ENCODE measurements at regions of chr12 and their contacts with region 1.

Region 1: DNA sequence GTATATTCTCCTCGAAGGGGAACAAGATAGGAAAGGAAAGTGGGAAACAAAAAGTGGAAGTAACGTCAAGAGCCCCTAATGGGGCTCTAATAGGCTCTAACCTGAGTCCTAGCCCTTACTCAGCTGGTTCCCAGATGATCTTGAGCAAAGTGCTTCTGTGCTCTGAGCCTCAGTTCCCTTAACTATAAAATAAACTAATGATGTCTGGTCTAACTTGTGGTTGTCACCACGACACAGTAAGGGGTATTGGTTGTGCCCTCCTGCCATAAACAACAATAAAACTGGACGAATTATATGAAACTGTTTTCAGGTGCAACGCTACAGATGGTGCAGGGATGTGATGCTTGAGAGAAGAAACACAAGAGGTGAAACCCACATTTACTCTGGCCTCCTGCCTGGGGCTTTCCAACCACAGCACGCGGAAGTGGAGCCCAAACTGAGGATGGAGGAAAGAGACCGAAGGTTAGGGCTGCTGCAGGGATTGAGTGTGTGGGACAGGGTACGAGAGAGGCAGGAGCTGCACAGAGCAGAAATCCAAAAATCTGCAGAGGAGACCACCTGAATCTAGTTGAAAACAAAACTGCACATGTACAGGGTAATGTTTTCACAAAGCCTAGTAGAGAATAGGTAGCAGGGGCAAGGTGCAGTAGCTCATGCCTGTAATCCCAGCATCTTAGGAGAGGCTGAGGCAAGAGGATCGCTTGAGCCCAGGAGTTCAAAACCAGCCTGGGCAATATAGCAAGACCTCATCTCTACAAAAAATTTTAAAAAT is 45.6 kb upstream of the BCL2L14 start:
- DNase-seq: peak; percentile 91
- H3K4me3 ChIP-seq: peak overlapping the region; percentile 58
- H3K27ac ChIP-seq: peak overlapping the region; percentile 94
- H3K4me1 ChIP-seq: peaks cover 80% of the 10 kb centered on the region
- CTCF ChIP-seq: no peak

Region 2: GRCh38 chr12:10212201-10213131 is 1812.6 kb before region 1 on chr12 and contains the start of gene GABARAPL1:
- CTCF ChIA-PET with region 1: no interaction called
- POLR2A ChIA-PET with region 1: no interaction called
- intact Hi-C with region 1: loop called (anchors 5 kb)
- DNase-seq: peak; percentile 79
- H3K4me3 ChIP-seq: peak within 1 kb of the TSS; percentile 98
- H3K27ac ChIP-seq: peak within 1 kb of the TSS; percentile 86
- H3K4me1 ChIP-seq: peaks cover 21% of the 10 kb centered on the region
- CTCF ChIP-seq: no peak
- total RNA-seq, gene GABARAPL1: 34.2 and 40.7 TPM in 2 replicates

Region 3: DNA sequence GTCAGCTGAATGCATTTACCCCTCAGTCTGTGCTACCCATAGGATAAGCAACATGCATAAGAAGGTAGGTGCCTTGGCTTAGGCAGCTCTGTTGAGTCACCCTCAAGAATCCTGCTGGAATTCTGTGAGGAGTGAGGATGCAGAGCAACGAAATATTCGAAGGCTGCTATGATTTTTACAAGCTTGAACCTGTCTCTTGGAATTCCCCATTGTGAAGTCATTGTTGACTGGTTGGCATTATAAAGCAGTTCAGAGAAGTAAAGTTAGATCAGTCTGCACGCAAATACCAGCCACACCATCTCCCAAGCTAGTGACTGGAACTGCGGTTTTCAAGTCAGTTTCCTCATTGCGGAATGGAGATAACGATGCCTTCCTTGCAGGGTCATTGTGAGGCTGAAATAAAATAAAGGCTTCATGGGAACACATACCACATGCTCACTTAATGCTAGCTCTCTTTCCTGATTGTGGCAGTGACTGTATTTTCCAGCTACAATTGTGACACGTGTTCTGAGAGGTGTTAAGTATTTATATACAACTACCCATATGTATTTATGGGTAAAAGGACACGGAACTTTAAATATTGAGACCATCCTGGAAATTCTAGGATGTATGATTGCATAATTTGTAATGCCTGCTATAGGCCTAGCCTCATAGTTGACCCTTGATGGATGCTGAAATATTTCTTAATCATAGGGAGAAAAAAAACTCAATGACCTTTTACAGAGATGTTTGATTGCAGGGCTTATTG is 278.9 kb before region 1 on chr12:
- CTCF ChIA-PET with region 1: no interaction called
- POLR2A ChIA-PET with region 1: no interaction called
- intact Hi-C with region 1: loop called (anchors 2 kb)
- DNase-seq: peak; percentile 51
- H3K4me3 ChIP-seq: no peak overlapping the region
- H3K27ac ChIP-seq: peak overlapping the region; percentile 100
- H3K4me1 ChIP-seq: peaks cover 100% of the 10 kb centered on the region
- CTCF ChIP-seq: no peak

Region 4: DNA sequence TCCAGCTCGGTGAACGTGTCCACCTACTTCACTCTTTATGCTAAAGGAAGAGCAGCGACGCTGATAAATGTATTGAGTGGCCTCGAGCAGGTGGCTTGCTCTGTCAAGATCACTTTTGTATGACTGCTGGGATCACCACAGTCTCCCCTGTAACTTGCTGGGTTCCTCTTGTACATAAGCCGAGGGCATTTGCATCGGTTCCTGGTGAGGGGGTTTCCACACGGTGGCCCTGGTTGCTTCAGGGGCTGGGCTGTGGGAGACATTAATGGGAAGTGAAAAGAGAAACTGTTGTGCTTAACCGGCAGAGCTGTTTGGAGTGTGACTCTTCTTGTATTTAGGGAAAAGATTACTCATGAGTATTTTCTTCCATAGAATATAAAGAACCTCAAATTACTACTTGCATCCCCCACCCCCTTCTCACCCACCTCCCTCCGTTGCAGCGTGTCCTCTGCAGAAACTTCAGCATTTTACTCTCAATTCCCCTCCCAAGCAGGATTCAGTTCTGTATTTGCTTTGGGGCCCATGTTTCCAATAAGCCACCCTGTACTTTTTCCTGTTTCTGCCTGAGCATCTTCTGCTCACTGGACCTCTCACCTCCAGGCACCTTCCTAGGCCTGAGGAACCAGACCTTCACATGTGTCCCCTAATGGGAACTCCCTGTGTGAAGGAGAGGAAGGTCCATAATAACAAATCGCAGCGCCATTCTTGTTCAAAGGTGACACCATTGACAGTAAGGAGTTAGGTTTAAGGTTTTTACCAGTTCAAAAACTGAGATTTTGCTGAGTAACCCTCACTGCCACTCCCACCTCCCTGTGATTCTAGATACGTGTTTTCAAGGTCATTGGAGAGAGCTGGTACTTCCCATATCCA is 188.6 kb before region 1 on chr12:
- CTCF ChIA-PET with region 1: no interaction called
- POLR2A ChIA-PET with region 1: no interaction called
- intact Hi-C with region 1: loop called (anchors 1 kb)
- DNase-seq: peak; percentile 95
- H3K4me3 ChIP-seq: peak overlapping the region; percentile 37
- H3K27ac ChIP-seq: peak overlapping the region; percentile 91
- H3K4me1 ChIP-seq: peaks cover 72% of the 10 kb centered on the region
- CTCF ChIP-seq: 0 out of 2 replicates have a peak, but pooled peaks have one; percentile 8

Region 5: GRCh38 chr12:11891754-11892386 is 133.2 kb before region 1 on chr12:
- CTCF ChIA-PET with region 1: no interaction called
- POLR2A ChIA-PET with region 1: interaction called, 4 read pairs
- intact Hi-C with region 1: loop called (anchors 2 kb)
- DNase-seq: no peak
- H3K4me3 ChIP-seq: no peak overlapping the region
- H3K27ac ChIP-seq: peak overlapping the region; percentile 98
- H3K4me1 ChIP-seq: peaks cover 81% of the 10 kb centered on the region
- CTCF ChIP-seq: peak; percentile 53

Region 6: GRCh38 chr12:11991604-11992003 is 33.5 kb before region 1 on chr12:
- CTCF ChIA-PET with region 1: no interaction called
- POLR2A ChIA-PET with region 1: no interaction called
- intact Hi-C with region 1: no loop called
- DNase-seq: no peak
- H3K4me3 ChIP-seq: no peak overlapping the region
- H3K27ac ChIP-seq: no peak overlapping the region
- H3K4me1 ChIP-seq: no peaks in the 10 kb centered on the region
- CTCF ChIP-seq: no peak

Region 7: GRCh38 chr12:12008931-12009611 is 16.0 kb before region 1 on chr12:
- CTCF ChIA-PET with region 1: interaction called, 4 read pairs
- POLR2A ChIA-PET with region 1: interaction called, 4 read pairs
- intact Hi-C with region 1: loop called (anchors 2 kb)
- DNase-seq: peak; percentile 78
- H3K4me3 ChIP-seq: no peak overlapping the region
- H3K27ac ChIP-seq: peak overlapping the region; percentile 67
- H3K4me1 ChIP-seq: peaks cover 58% of the 10 kb centered on the region
- CTCF ChIP-seq: no peak; the same call in 1 of the 2 replicates

Region 8: DNA sequence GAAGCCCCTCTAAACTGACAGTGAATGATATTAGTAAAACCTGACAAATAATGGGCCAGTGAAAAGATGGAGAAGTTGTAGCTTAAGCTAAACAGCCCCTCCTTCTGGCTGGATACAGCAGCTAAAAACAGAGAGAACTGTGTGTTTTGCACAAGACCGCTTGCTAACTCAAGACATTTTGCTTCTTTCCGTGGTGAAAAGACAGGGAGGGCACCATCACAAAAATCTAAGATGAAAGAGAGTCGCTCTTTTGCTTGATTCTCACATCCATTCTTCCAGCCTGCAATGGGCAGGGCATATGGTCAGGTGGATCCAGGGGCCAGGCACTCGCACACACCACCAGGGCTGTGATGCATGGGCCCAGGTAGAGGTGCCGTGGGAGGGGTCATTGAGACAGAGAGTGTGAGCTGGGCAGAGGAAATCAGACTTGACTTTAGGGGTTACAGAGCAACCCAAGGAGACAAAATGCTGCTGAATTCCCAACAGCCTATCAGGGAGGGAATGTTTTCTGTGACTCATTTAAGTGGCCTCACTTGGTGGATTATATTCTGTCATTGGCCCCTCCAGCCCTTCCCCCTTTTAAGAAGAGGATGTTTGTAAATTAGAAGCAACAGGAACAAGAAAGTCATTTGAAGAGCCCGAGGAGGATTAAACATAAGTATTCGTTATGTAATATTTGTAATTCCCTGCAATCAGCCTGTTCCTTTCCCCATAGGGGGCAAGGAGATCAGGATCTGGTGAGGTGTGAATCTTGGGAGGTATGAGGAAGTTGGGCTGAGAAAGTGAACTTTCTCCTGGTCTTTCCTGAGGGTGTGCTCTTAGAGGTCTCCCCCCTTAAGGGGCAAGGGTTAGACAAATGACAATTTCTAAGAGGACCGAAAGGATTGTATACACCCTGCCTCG is 1183.7 kb after region 1 on chr12:
- CTCF ChIA-PET with region 1: no interaction called
- POLR2A ChIA-PET with region 1: no interaction called
- intact Hi-C with region 1: no loop called
- DNase-seq: no peak
- H3K4me3 ChIP-seq: no peak overlapping the region
- H3K27ac ChIP-seq: no peak overlapping the region
- H3K4me1 ChIP-seq: no peaks in the 10 kb centered on the region
- CTCF ChIP-seq: peak; percentile 41